GM12878 (cell line): ENCODE measurements at regions of chr11 and their contacts with region 1.

Region 1: GRCh38 chr11:3849297-3849874 is 6.1 kb upstream of the STIM1 start:
- DNase-seq: no peak
- ATAC-seq: peak; percentile 80
- H3K4me3 ChIP-seq: no peak overlapping the region
- H3K27ac ChIP-seq: no peak overlapping the region
- H3K4me1 ChIP-seq: peaks cover 12% of the 10 kb centered on the region
- H3K27me3 ChIP-seq: no peaks in the 10 kb centered on the region
- CTCF ChIP-seq: peak; percentile 58 to 74 (median 67)
- EP300 ChIP-seq: no peak
- POLR2A ChIP-seq: no peak
- RAD21 ChIP-seq: peak; percentile 75

Region 2: DNA sequence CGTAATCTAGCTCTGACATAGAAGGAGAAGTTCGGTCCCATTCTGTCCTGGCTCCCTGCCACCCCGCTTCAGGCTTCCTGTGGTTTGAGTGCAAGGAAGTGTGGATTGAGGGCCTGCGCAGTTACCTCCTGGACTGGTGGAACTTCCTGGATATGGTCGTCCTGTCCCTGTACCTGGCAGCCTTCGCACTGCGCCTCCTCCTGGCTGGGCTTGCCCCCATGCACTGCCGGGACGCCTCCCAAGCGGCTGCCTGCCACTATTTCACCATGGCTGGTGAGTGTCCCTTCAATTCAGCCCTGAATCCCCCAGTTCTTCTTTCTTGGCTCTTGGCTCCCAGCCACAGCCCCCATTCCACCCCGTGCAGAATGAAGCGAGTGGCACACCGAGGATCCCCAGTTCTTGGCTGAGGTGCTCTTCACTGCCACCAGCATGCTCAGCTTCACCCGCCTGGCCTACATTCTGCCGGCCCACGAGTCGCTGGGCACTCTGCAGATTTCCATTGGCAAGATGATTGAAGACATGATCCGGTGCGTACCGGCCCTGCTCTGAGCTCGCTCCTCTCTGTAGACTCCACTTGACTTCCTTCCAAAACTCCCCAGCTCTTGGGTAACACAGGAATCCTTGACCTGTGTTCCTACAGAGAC is 223.0 kb before region 1 on chr11:
- CTCF ChIA-PET with region 1: no interaction called
- POLR2A ChIA-PET with region 1: no interaction called
- RAD21 ChIA-PET with region 1: no interaction called
- SMC1A ChIA-PET with region 1: no interaction called
- in situ Hi-C with region 1: no loop called
- intact Hi-C with region 1: no loop called
- DNase-seq: no peak
- ATAC-seq: no peak
- H3K4me3 ChIP-seq: no peak overlapping the region
- H3K27ac ChIP-seq: no peak overlapping the region
- H3K4me1 ChIP-seq: no peaks in the 10 kb centered on the region
- H3K27me3 ChIP-seq: no peaks in the 10 kb centered on the region
- CTCF ChIP-seq: no peak
- EP300 ChIP-seq: no peak
- POLR2A ChIP-seq: no peak
- RAD21 ChIP-seq: no peak

Region 3: GRCh38 chr11:3824714-3825472 is 24.5 kb before region 1 on chr11:
- CTCF ChIA-PET with region 1: interaction called, 1,047 read pairs
- POLR2A ChIA-PET with region 1: no interaction called
- RAD21 ChIA-PET with region 1: interaction called, 304 read pairs
- SMC1A ChIA-PET with region 1: interaction called, 10 read pairs
- in situ Hi-C with region 1: no loop called
- intact Hi-C with region 1: no loop called
- DNase-seq: no peak
- ATAC-seq: peak; percentile 97
- H3K4me3 ChIP-seq: no peak overlapping the region
- H3K27ac ChIP-seq: no peak overlapping the region
- H3K4me1 ChIP-seq: peaks cover 2% of the 10 kb centered on the region; the same call in 1 of the 2 replicates
- H3K27me3 ChIP-seq: no peaks in the 10 kb centered on the region
- CTCF ChIP-seq: peak; percentile 83 to 97 (median 96)
- EP300 ChIP-seq: no peak
- POLR2A ChIP-seq: peak; percentile 12; the same call in 1 of the 2 replicates
- RAD21 ChIP-seq: peak; percentile 75

Region 4: DNA sequence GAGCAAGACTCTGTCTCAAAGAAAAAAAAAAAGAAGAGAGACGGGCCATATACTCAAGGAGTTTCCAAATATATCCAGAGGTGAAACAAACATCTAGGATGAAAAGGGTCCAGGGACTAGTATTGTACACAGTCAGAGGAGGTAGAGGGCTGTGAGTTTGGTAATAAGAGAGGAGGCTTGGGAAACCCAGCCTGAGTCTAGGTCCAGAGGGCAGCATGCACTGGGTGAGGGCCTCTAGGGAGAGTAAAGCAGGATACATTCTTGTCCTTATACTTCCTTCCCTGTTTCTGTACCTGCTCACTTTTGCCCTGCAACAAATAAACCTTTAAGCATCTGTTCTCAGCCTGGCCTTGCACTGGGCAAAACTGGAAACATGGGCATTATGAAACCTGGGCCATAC is 37.6 kb after region 1 on chr11:
- CTCF ChIA-PET with region 1: interaction called, 1,047 read pairs
- POLR2A ChIA-PET with region 1: interaction called, 405 read pairs
- RAD21 ChIA-PET with region 1: interaction called, 253 read pairs
- SMC1A ChIA-PET with region 1: interaction called, 633 read pairs
- in situ Hi-C with region 1: no loop called
- intact Hi-C with region 1: no loop called
- DNase-seq: no peak
- ATAC-seq: no peak
- H3K4me3 ChIP-seq: no peak overlapping the region
- H3K27ac ChIP-seq: no peak overlapping the region
- H3K4me1 ChIP-seq: peaks cover 28% of the 10 kb centered on the region
- H3K27me3 ChIP-seq: no peaks in the 10 kb centered on the region
- CTCF ChIP-seq: no peak
- EP300 ChIP-seq: no peak
- POLR2A ChIP-seq: no peak
- RAD21 ChIP-seq: no peak

Region 5: GRCh38 chr11:3929649-3930048 is 80.3 kb after region 1 on chr11:
- CTCF ChIA-PET with region 1: interaction called, 47 read pairs
- POLR2A ChIA-PET with region 1: interaction called, 16 read pairs
- RAD21 ChIA-PET with region 1: interaction called, 38 read pairs
- SMC1A ChIA-PET with region 1: interaction called, 39 read pairs
- in situ Hi-C with region 1: no loop called
- intact Hi-C with region 1: no loop called
- DNase-seq: no peak
- ATAC-seq: no peak
- H3K4me3 ChIP-seq: no peak overlapping the region
- H3K27ac ChIP-seq: no peak overlapping the region
- H3K4me1 ChIP-seq: peaks cover 14% of the 10 kb centered on the region
- H3K27me3 ChIP-seq: no peaks in the 10 kb centered on the region
- CTCF ChIP-seq: no peak
- EP300 ChIP-seq: no peak
- POLR2A ChIP-seq: no peak
- RAD21 ChIP-seq: no peak

Region 6: DNA sequence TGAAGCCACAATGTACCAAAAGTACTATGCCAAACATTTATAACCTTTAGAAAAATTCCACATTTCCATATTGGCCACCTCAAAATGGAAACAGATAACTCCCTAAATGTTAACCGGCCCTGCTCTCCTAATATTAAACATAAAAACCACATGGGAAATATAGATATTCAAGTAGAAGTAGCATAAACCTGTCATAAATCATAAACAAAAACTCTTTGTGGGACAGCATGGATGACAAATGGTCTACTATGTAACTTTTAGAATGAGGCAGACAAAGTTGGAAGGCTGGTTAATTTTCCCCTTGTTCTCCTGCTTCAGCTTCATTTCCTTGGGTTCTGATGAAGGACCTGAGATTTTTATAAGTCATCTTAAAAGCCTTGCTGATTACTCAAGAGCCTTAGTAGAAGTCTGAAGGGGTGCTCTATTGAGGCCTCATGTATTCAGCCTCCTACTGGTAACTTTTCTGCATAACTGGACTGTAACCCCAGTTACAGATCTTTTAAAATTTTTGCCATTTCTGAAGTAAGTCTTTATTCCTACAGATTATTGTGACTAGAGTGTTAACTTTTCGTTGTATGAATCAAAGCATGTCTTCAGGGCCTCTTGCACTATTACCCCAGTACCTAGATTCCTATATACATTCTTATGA is 122.5 kb after region 1 on chr11:
- CTCF ChIA-PET with region 1: interaction called, 27 read pairs
- POLR2A ChIA-PET with region 1: interaction called, 4 read pairs
- RAD21 ChIA-PET with region 1: interaction called, 13 read pairs
- SMC1A ChIA-PET with region 1: interaction called, 17 read pairs
- in situ Hi-C with region 1: no loop called
- intact Hi-C with region 1: no loop called
- DNase-seq: no peak
- ATAC-seq: peak; percentile 62
- H3K4me3 ChIP-seq: no peak overlapping the region
- H3K27ac ChIP-seq: no peak overlapping the region
- H3K4me1 ChIP-seq: peaks cover 4% of the 10 kb centered on the region; the same call in 1 of the 2 replicates
- H3K27me3 ChIP-seq: no peaks in the 10 kb centered on the region
- CTCF ChIP-seq: 0 out of 6 replicates have a peak, but pooled peaks of 1 of the 3 experiments have one; percentile 12
- EP300 ChIP-seq: no peak
- POLR2A ChIP-seq: no peak
- RAD21 ChIP-seq: no peak; the same call in 1 of the 2 replicates

Region 7: GRCh38 chr11:4044976-4045646 is 195.7 kb after region 1 on chr11:
- CTCF ChIA-PET with region 1: interaction called, 15 read pairs
- POLR2A ChIA-PET with region 1: interaction called, 5 read pairs
- RAD21 ChIA-PET with region 1: interaction called, 12 read pairs
- SMC1A ChIA-PET with region 1: interaction called, 6 read pairs
- in situ Hi-C with region 1: no loop called
- intact Hi-C with region 1: no loop called
- DNase-seq: no peak
- ATAC-seq: no peak; the same call in 2 of the 3 replicates
- H3K4me3 ChIP-seq: no peak overlapping the region
- H3K27ac ChIP-seq: no peak overlapping the region
- H3K4me1 ChIP-seq: no peaks in the 10 kb centered on the region
- H3K27me3 ChIP-seq: no peaks in the 10 kb centered on the region
- CTCF ChIP-seq: no peak
- EP300 ChIP-seq: no peak
- POLR2A ChIP-seq: no peak
- RAD21 ChIP-seq: no peak

Region 8: GRCh38 chr11:4072668-4073285 is 223.4 kb after region 1 on chr11:
- CTCF ChIA-PET with region 1: interaction called, 979 read pairs
- POLR2A ChIA-PET with region 1: interaction called, 39 read pairs
- RAD21 ChIA-PET with region 1: interaction called, 605 read pairs
- SMC1A ChIA-PET with region 1: interaction called, 805 read pairs
- in situ Hi-C with region 1: loop called (anchors 5 kb)
- intact Hi-C with region 1: loop called (anchors 1 kb)
- DNase-seq: peak; percentile 51
- ATAC-seq: peak; percentile 95
- H3K4me3 ChIP-seq: no peak overlapping the region
- H3K27ac ChIP-seq: no peak overlapping the region
- H3K4me1 ChIP-seq: no peaks in the 10 kb centered on the region
- H3K27me3 ChIP-seq: no peaks in the 10 kb centered on the region
- CTCF ChIP-seq: peak; percentile 75 to 95 (median 83)
- EP300 ChIP-seq: no peak
- POLR2A ChIP-seq: no peak
- RAD21 ChIP-seq: peak; percentile 98